Aorta (tissue), 5 donors: ENCODE measurements at regions of chr13 and their contacts with region 1.

Region 1: DNA sequence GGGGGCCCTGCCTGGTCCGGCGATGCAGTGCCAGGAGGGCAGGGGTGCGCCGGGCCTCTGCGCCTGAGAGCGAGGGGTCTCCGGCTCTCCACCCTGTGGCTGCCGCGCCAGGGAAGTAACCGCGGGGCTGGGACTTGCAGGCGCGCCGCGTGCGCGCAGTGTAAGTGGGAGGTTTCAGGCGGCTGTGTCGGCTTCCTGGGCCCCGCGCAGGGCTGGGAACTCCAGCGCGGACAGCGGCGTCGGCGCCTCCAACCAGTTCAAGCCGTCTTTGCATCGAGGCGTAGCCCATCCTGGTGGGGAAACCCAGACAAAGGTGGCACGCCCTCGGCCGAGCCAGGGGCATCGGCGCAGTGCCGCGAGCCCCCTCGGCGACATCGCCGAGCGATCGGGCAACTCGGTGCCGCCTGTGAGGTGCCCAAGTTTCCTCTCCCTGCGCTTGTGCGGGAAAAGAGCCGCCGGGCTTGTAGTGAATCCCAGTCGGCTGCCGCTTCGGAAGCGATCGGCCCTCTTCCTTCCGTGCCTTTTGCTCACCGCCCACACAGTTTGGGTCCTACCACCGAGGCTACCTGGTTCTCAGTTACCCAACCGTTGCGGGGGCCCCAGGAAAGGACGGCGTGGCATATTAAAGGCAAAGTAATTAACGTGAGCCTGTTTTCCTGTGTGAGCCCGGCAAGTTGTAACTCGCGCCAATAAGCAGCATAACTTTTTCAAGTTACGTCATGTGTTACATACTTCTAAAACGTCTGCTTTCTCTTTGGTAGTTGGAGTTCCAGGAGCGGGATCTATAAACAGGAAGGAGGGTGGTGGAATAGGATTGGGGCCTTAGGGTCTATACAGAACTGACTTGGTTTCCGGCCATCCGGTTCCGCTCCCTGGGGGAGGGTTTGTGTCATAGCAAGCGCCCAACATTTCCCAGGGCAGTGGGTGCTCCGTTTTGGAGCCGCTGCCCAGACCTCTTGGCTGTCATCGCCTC is 1.2 kb downstream of the LRCH1 start:
- DNase-seq: peak; percentile 87 to 91
- ATAC-seq: peak; percentile 84
- H3K4me3 ChIP-seq: peak overlapping the region; percentile 68 to 98
- H3K27ac ChIP-seq: peak overlapping the region; percentile 48 to 73
- H3K4me1 ChIP-seq: no peaks in the 10 kb centered on the region
- H3K27me3 ChIP-seq: no peaks in the 10 kb centered on the region

Region 2: GRCh38 chr13:46492946-46493345 is 61.2 kb before region 1 on chr13:
- intact Hi-C with region 1: loop called (anchors 2 to 10 kb)
- DNase-seq: no peak
- ATAC-seq: no peak
- H3K4me3 ChIP-seq: no peak overlapping the region
- H3K27ac ChIP-seq: no peak overlapping the region
- H3K4me1 ChIP-seq: peaks cover 4 to 8% of the 10 kb centered on the region in 2 donors
- H3K27me3 ChIP-seq: no peaks in the 10 kb centered on the region

Region 3: DNA sequence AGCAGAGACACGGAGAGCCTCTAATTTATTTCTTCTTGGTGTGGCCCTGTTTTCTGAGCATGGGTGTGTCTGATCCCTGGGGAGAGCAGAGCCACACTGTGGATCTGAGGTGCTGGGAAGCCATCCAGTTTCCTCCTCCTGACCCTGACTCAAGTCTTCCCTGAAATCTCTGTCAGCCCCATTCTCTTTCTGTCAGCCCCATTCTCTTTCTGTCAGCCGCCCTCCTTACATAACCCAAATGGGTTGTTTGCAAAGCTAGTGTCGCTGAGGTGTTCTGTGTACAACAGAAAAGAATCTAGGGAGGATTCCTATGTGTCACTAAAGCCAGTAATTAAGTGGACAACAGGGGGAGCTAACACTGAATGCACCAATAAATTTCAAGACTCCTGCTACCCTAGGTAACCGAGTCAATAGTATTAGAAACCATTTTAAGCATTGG is 49.0 kb after region 1 on chr13:
- intact Hi-C with region 1: loop called in 1 of 2 experiments (anchors 10 kb)
- DNase-seq: no peak
- ATAC-seq: no peak
- H3K4me3 ChIP-seq: no peak overlapping the region
- H3K27ac ChIP-seq: no peak overlapping the region
- H3K4me1 ChIP-seq: peaks cover 11 to 30% of the 10 kb centered on the region in 2 donors
- H3K27me3 ChIP-seq: no peaks in the 10 kb centered on the region

Region 4: DNA sequence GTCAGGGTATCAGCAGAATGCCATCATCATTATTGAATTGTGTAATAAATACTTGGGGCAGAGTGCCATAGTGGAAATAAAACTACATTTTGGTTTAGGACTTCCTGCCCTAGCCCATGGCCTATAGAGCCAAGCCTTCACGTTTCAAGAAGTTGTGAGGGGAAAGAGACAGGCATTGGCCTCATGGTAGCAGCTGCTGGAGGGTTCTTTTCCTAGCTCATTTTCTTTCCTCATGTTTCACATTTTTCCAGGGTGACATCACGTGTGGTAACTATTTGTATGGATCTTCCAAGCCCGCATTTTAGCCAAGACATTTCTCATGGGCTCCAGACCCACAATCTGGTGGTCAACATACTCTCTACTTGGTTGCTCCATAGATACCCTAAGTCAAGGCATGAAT is 79.2 kb after region 1 on chr13:
- intact Hi-C with region 1: loop called in 1 of 2 experiments (anchors 5 kb)
- DNase-seq: no peak
- ATAC-seq: peak; percentile 45
- H3K4me3 ChIP-seq: no peak overlapping the region
- H3K27ac ChIP-seq: no peak overlapping the region
- H3K4me1 ChIP-seq: peaks cover 7 to 10% of the 10 kb centered on the region in 2 donors
- H3K27me3 ChIP-seq: no peaks in the 10 kb centered on the region

Region 5: DNA sequence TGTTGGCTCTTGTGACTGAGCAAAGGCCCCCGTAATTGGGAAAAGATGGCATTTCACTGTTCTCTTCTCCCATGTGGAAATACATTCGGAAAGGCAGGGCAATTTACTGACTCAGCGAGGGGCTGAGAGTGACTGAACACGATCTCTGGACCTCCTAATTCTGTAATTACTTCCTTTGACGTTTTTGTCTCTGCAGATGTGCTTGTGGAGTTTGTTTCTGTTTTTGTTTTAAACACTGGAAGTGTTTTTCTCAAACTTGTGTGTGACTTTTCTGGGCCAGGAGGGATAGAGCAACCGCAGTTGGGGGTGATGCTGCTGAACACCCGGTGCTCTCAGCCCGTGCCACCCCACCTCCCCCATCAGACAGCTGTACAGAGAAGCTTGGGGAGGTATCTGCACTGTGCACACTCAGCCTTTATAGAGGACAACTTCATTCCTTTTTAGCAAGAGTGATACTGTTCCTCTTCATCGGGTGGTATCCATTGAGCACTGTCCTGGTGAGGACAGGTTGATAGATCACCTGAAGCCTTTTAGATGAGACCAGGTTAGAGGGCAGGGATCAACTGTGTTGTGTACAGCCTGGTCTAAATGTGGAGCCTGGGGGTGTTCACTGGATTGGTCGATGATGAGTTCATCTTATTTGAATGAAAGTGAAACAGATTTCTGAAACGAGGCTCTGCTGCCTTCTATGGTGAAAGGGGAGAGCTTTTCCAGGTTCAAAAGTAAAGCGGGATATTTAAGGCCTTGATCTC is 125.4 kb after region 1 on chr13:
- intact Hi-C with region 1: loop called (anchors 5 to 10 kb)
- DNase-seq: no peak
- ATAC-seq: peak; percentile 84
- H3K4me3 ChIP-seq: peak overlapping the region; percentile 29 to 85
- H3K27ac ChIP-seq: peak overlapping the region; percentile 51 to 69
- H3K4me1 ChIP-seq: peaks cover 4 to 11% of the 10 kb centered on the region in 2 donors
- H3K27me3 ChIP-seq: no peaks in the 10 kb centered on the region

Region 6: DNA sequence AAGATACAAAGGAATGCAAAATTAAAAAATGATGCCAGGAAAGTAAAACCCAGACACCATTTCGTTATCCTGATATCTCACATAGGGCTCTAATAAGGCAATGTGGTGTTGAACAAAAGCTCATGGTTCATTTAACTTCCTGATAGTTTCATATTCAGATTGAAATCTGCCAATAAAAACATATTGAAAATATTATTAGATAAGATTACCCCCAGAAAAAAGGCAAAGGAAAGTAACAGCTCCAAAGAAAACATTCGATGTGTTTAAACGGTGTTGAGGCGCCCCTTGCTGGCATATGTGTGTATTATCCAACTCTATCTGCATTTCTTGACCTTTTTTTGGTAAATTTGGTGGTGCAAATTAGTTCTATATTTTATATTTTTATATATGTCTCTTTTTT is 166.9 kb after region 1 on chr13:
- intact Hi-C with region 1: loop called (anchors 1 kb)
- DNase-seq: peak in 1 of 2 donors; percentile 52
- ATAC-seq: peak; percentile 85
- H3K4me3 ChIP-seq: no peak overlapping the region
- H3K27ac ChIP-seq: no peak overlapping the region
- H3K4me1 ChIP-seq: no peaks in the 10 kb centered on the region
- H3K27me3 ChIP-seq: no peaks in the 10 kb centered on the region

Region 7: GRCh38 chr13:47372742-47373141 is 818.6 kb after region 1 on chr13:
- intact Hi-C with region 1: no loop called
- DNase-seq: no peak
- ATAC-seq: no peak
- H3K4me3 ChIP-seq: no peak overlapping the region
- H3K27ac ChIP-seq: no peak overlapping the region
- H3K4me1 ChIP-seq: no peaks in the 10 kb centered on the region
- H3K27me3 ChIP-seq: no peaks in the 10 kb centered on the region